ENCODE measurements at regions of chr22 and their contacts with region 1.

Region 1: GRCh38 chr22:17171313-17172171 is 12.5 kb upstream of the HDHD5 start:
- H3K4me3 ChIP-seq: peak overlapping the region; percentile 78
- H3K27ac ChIP-seq: peak overlapping the region; percentile 83
- H3K4me1 ChIP-seq: 0 out of 2 replicates have a peak, but pooled peaks cover 4% of the 10 kb centered on the region
- CTCF ChIP-seq: peak; percentile 90

Region 2: DNA sequence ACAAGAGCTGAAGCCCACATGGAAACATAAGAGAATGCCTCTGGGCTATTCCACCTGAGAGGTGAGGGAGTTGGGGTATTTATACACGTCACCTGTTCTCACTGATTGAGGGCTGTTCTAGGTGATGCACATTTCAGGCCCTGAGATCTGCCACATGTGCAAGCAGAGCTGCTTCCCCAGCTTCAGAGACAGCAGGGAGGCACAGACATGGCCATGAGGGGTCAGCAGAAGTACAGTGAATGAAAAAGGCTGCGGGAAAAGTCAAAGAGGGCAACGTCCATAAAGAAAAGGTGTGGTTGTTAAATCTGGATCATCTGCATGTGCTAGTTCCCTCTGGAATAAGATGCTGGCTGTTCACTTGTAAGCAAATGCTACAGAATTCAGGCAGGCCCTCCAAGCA is 239.0 kb before region 1 on chr22:
- CTCF ChIA-PET with region 1: no interaction called
- POLR2A ChIA-PET with region 1: no interaction called
- H3K4me3 ChIP-seq: no peak overlapping the region
- H3K27ac ChIP-seq: no peak overlapping the region
- H3K4me1 ChIP-seq: no peaks in the 10 kb centered on the region
- CTCF ChIP-seq: no peak

Region 3: GRCh38 chr22:17077255-17077654 is 94.3 kb before region 1 on chr22:
- CTCF ChIA-PET with region 1: interaction called, 49 read pairs
- POLR2A ChIA-PET with region 1: interaction called, 13 read pairs
- H3K4me3 ChIP-seq: no peak overlapping the region
- H3K27ac ChIP-seq: no peak overlapping the region
- H3K4me1 ChIP-seq: no peaks in the 10 kb centered on the region
- CTCF ChIP-seq: no peak

Region 4: DNA sequence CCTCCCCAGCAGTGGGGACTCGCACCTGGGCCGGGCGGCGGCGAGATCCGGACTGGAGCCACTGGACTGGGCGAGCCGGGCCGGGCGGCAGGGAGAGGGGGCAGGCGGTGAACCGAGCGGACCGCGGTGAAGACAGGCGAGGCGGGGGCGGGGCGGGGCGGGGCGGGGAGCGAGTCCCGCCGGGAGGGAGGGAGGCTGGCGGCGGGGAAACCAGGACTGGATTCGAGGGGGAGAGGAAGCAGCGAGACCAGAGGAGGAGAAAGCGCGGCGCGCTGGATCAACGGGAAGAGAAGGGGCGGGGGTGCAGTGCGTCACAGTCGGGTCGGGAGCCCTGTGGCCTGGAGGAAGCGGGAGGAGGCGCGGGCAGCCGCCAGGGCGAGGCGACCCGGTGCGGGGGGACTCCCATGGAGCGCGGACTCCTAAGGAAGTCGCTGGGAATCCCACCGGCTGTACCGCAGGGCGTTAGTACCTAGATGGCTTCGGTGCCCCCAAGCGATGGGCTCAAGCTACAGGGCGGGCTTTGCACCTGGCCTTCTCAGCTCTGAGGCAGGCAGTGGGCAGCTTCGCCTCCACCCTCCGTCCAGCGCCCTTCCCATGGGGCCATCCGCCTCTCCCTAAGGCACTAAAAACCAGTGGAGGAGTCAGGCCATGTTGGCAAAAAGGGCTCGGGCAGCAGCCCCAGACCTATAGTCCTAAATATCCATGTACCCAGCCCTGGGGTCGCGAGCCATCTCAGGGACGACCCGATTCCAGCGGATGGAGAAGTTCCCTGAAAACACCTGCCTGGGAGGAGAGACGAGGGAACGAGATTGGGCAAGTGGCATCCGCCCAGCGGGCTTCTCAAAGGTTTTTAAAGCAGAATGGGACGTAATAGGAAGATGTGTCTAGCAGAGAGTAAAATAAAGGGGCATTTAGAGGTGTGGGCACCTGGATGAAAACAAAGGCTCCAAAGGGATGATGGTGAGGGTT is 50.0 kb before region 1 on chr22 and contains the start of gene TMEM121B:
- CTCF ChIA-PET with region 1: interaction called, 18 read pairs
- POLR2A ChIA-PET with region 1: interaction called, 5 read pairs
- H3K4me3 ChIP-seq: peak within 1 kb of the TSS; percentile 57
- H3K27ac ChIP-seq: peak within 1 kb of the TSS; percentile 31; the same call in 1 of the 2 replicates
- H3K4me1 ChIP-seq: no peaks in the 10 kb centered on the region
- CTCF ChIP-seq: 0 out of 2 replicates have a peak, but pooled peaks have one; percentile 20

Region 5: GRCh38 chr22:17191163-17191784 is 19.7 kb after region 1 on chr22:
- CTCF ChIA-PET with region 1: interaction called, 51 read pairs
- POLR2A ChIA-PET with region 1: interaction called, 3 read pairs
- H3K4me3 ChIP-seq: no peak overlapping the region
- H3K27ac ChIP-seq: no peak overlapping the region
- H3K4me1 ChIP-seq: peaks cover 5% of the 10 kb centered on the region
- CTCF ChIP-seq: no peak

Region 6: DNA sequence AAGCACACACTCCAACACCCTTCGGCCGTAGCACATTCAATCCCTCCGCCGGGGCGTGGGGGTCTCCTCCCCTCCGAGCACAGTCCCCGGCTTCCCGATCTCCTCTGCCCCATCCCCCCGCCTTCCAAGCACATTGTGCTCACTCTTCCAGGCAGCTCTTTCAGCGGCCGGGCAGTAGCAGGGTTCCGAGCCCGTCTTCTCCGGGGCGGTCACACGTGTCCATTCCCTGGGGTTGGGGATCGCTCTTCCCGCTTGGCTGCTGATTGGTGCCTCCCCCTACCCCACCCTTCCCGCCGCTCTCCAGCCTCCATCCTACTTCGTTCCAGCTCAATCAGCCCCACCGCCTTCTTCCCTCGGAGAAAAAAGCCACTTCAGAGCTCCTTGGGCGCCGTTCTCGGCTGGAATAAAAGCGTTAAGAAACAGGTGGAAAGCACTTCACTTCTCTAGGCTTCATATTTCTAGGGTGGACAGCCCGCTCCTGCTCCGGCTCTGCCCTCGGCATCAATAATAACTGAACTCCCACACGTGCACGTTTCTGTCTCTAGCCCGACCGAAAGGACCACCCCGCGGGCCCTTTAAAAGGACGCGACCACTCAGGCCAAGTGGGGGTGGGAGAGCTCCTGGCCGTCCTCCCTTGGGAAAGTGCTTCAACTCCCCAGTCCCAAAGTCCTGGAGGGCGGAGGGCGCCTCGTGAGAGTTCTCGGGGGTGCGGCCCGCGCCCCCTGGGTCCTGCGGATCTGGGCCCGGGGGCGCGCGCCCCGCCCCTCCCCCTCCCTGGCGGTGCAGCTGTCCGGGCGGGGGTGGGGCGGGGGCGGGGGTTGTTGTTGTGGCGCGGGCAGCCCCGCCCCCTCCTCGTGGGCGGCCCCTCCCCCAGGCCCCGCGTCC is 197.3 kb after region 1 on chr22:
- CTCF ChIA-PET with region 1: interaction called, 21 read pairs
- POLR2A ChIA-PET with region 1: interaction called, 25 read pairs
- H3K4me3 ChIP-seq: peak overlapping the region; percentile 92
- H3K27ac ChIP-seq: peak overlapping the region; percentile 93
- H3K4me1 ChIP-seq: peaks cover 3% of the 10 kb centered on the region
- CTCF ChIP-seq: no peak

Region 7: DNA sequence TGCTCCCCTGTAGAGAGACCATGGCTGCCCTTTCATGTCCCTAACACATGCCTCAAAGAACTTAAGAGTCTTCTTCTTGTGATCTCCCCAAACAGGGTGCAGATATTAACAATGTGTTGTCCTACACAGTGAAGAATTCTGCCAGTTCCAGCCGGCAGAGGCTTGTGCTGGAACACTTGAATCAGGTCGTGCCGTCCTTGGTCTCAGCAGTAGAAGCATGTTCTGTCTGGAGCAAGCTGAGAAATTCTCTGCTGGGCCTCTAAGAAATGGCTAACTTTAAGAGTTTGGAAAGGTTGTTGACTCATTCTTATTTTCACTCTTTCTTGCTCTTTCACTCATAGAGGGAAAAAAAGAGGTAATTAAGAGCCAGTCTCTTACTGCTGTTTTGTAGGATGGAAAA is 320.7 kb after region 1 on chr22:
- CTCF ChIA-PET with region 1: interaction called, 16 read pairs
- POLR2A ChIA-PET with region 1: no interaction called
- H3K4me3 ChIP-seq: no peak overlapping the region
- H3K27ac ChIP-seq: no peak overlapping the region
- H3K4me1 ChIP-seq: no peaks in the 10 kb centered on the region
- CTCF ChIP-seq: no peak

Region 8: GRCh38 chr22:17974703-17975372 is 803.3 kb after region 1 on chr22:
- CTCF ChIA-PET with region 1: no interaction called
- POLR2A ChIA-PET with region 1: interaction called, 11 read pairs
- H3K4me3 ChIP-seq: no peak overlapping the region
- H3K27ac ChIP-seq: no peak overlapping the region
- H3K4me1 ChIP-seq: peaks cover 9% of the 10 kb centered on the region
- CTCF ChIP-seq: no peak

Measured in HEK293 (cell line).